H1 (cell line): ENCODE measurements at regions of chr15 and their contacts with region 1.

Region 1: GRCh38 chr15:89874926-89875564 is 18.7 kb downstream of the AP3S2 start:
- DNase-seq: peak; percentile 43 to 88
- H3K4me3 ChIP-seq: no peak overlapping the region
- H3K27ac ChIP-seq: no peak overlapping the region
- H3K4me1 ChIP-seq: no peaks in the 10 kb centered on the region
- H3K27me3 ChIP-seq: no peaks in the 10 kb centered on the region
- CTCF ChIP-seq: peak; percentile 94 to 96 (median 95)
- EP300 ChIP-seq: no peak
- POLR2A ChIP-seq: no peak
- RAD21 ChIP-seq: peak; percentile 77 to 87

Region 2: DNA sequence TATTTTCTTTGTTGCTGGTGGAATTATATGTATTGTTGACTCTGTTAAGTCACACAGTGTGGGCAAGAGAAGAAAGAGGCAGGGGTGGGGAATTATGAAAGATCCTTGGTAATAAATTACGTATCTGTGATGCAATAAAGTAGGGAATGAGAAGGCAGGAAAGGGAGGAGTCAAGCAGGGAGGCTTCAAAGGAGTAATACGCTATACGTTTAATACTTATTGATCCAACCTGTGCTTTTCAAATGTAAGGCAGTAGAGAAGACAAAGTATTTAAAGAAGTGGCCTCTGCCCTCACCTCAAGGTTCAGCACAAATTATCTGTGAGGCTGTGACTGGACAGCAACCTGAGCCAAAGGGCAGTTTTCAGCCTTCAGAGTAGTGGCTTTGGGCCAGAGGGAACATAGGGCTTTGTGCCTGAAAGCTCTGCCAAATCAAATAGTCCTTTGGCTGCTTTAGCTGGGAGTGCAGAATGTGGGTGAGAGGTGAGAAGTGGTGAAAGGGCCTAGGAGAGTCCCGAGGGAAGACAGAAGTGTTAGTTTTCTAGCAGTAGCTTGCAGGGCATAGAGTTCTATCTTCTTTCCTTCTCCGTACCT is 194.7 kb before region 1 on chr15:
- CTCF ChIA-PET with region 1: no interaction called
- POLR2A ChIA-PET with region 1: no interaction called
- DNase-seq: no peak
- H3K4me3 ChIP-seq: no peak overlapping the region
- H3K27ac ChIP-seq: no peak overlapping the region
- H3K4me1 ChIP-seq: no peaks in the 10 kb centered on the region
- H3K27me3 ChIP-seq: no peaks in the 10 kb centered on the region; a peak in 1 of 7 replicates
- CTCF ChIP-seq: no peak
- EP300 ChIP-seq: no peak
- POLR2A ChIP-seq: no peak
- RAD21 ChIP-seq: no peak

Region 3: DNA sequence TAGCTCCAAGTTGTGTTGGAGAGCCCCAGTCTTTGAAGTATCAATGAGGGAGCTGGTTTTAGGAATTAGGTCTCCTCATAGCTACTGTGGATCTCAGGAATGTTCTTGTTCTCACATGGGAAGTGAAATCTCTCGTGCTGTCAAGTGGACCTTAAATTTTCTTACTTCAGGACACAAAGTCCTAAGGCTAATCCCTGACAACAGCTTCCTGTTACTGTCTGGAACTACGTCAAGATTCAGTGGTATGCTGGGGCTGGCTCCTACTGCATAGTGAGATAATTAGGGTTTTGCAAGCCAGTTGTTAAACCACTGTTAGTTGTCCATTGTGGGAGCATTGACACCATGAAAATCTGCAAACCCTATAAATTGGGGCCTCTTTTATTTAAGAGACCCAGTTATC is 146.8 kb before region 1 on chr15:
- CTCF ChIA-PET with region 1: interaction called, 12 read pairs
- POLR2A ChIA-PET with region 1: no interaction called
- DNase-seq: no peak
- H3K4me3 ChIP-seq: no peak overlapping the region
- H3K27ac ChIP-seq: no peak overlapping the region
- H3K4me1 ChIP-seq: no peaks in the 10 kb centered on the region; a peak in 2 of 7 replicates
- H3K27me3 ChIP-seq: no peaks in the 10 kb centered on the region; a peak in 1 of 7 replicates
- CTCF ChIP-seq: no peak
- EP300 ChIP-seq: no peak
- POLR2A ChIP-seq: no peak
- RAD21 ChIP-seq: no peak

Region 4: GRCh38 chr15:89750560-89751542 is 124.2 kb before region 1 on chr15 and contains the start of gene MESP1:
- CTCF ChIA-PET with region 1: interaction called, 34 read pairs
- POLR2A ChIA-PET with region 1: no interaction called
- DNase-seq: peak; percentile 71 to 93
- H3K4me3 ChIP-seq: peak within 1 kb of the TSS; percentile 32 to 66 (median 50)
- H3K27ac ChIP-seq: no peak within 1 kb of the TSS
- H3K4me1 ChIP-seq: peaks cover 0 to 24% (median 19%) of the 10 kb centered on the region in 4 experiments; a peak in 6 of 7 replicates
- H3K27me3 ChIP-seq: peaks cover 40 to 65% (median 63%) of the 10 kb centered on the region in 4 experiments
- CTCF ChIP-seq: peak; percentile 71 to 98 (median 86)
- EP300 ChIP-seq: no peak
- POLR2A ChIP-seq: no peak
- RAD21 ChIP-seq: peak; percentile 52 to 62; a peak in 3 of 4 replicates
- total RNA-seq, gene MESP1: 0.15 TPM in 1 of 2 replicates, not detected in the other

Region 5: DNA sequence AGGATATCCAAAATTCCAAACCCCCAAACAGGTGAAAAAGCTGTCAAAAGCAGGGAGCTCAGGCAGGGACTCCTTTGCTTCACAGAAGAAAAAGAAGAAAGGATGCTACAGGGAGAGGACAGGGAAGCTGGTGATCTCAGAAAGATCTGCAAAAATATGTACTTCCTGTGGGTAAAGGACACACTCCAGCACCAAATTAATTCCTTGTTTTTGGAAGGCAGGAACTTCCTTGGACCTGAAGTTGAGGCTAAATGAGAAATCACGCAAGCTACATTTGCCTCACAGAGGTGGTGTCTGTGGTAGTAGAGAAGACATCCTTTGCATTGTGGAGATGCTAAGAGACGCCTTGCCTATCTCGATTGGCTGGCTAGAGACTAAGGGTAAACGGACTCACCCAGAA is 33.7 kb before region 1 on chr15:
- CTCF ChIA-PET with region 1: interaction called, 11 read pairs
- POLR2A ChIA-PET with region 1: no interaction called
- DNase-seq: no peak
- H3K4me3 ChIP-seq: no peak overlapping the region
- H3K27ac ChIP-seq: no peak overlapping the region
- H3K4me1 ChIP-seq: no peaks in the 10 kb centered on the region
- H3K27me3 ChIP-seq: no peaks in the 10 kb centered on the region
- CTCF ChIP-seq: no peak
- EP300 ChIP-seq: no peak
- POLR2A ChIP-seq: no peak
- RAD21 ChIP-seq: no peak

Region 6: GRCh38 chr15:89888214-89888804 is 13.3 kb after region 1 on chr15:
- CTCF ChIA-PET with region 1: interaction called, 89 read pairs
- POLR2A ChIA-PET with region 1: interaction called, 3 read pairs
- DNase-seq: no peak
- H3K4me3 ChIP-seq: no peak overlapping the region
- H3K27ac ChIP-seq: no peak overlapping the region
- H3K4me1 ChIP-seq: no peaks in the 10 kb centered on the region; a peak in 1 of 7 replicates
- H3K27me3 ChIP-seq: no peaks in the 10 kb centered on the region
- CTCF ChIP-seq: peak in 2 of 3 experiments; percentile 41 to 49; a peak in 3 of 4 replicates
- EP300 ChIP-seq: no peak
- POLR2A ChIP-seq: no peak
- RAD21 ChIP-seq: peak; percentile 53 to 67